HCT116 (cell line): ENCODE measurements at regions of chr19 and their contacts with region 1.

Region 1: GRCh38 chr19:35162471-35163326 is 8.2 kb downstream of the FXYD5 start:
- DNase-seq: peak; percentile 85
- ATAC-seq: peak; percentile 88
- H3K4me3 ChIP-seq: peak overlapping the region in 1 of 2 experiments; percentile 47; a peak in 2 of 4 replicates
- H3K27ac ChIP-seq: peak overlapping the region; percentile 62
- H3K4me1 ChIP-seq: peaks cover 38 to 69% of the 10 kb centered on the region in 2 experiments
- H3K27me3 ChIP-seq: no peaks in the 10 kb centered on the region
- CTCF ChIP-seq: no peak
- POLR2A ChIP-seq: no peak
- RAD21 ChIP-seq: no peak

Region 2: GRCh38 chr19:34943861-34944573 is 218.7 kb before region 1 on chr19:
- CTCF ChIA-PET with region 1: no interaction called
- POLR2A ChIA-PET with region 1: no interaction called
- RAD21 ChIA-PET with region 1: no interaction called
- intact Hi-C with region 1: no loop called
- DNase-seq: no peak
- ATAC-seq: no peak
- H3K4me3 ChIP-seq: no peak overlapping the region
- H3K27ac ChIP-seq: no peak overlapping the region
- H3K4me1 ChIP-seq: no peaks in the 10 kb centered on the region
- H3K27me3 ChIP-seq: no peaks in the 10 kb centered on the region
- CTCF ChIP-seq: no peak
- POLR2A ChIP-seq: no peak
- RAD21 ChIP-seq: no peak

Region 3: GRCh38 chr19:35098413-35099049 is 64.2 kb before region 1 on chr19:
- CTCF ChIA-PET with region 1: no interaction called
- POLR2A ChIA-PET with region 1: no interaction called
- RAD21 ChIA-PET with region 1: no interaction called
- intact Hi-C with region 1: no loop called
- DNase-seq: no peak
- ATAC-seq: no peak
- H3K4me3 ChIP-seq: no peak overlapping the region
- H3K27ac ChIP-seq: no peak overlapping the region
- H3K4me1 ChIP-seq: no peaks in the 10 kb centered on the region
- H3K27me3 ChIP-seq: no peaks in the 10 kb centered on the region
- CTCF ChIP-seq: no peak
- POLR2A ChIP-seq: no peak
- RAD21 ChIP-seq: no peak

Region 4: GRCh38 chr19:35124098-35125060 is 38.3 kb before region 1 on chr19:
- CTCF ChIA-PET with region 1: no interaction called
- POLR2A ChIA-PET with region 1: no interaction called
- RAD21 ChIA-PET with region 1: no interaction called
- intact Hi-C with region 1: no loop called
- DNase-seq: peak; percentile 70
- ATAC-seq: peak; percentile 96
- H3K4me3 ChIP-seq: peak overlapping the region; percentile 41 to 54
- H3K27ac ChIP-seq: peak overlapping the region; percentile 30; the same call in 1 of the 2 replicates
- H3K4me1 ChIP-seq: peaks cover 21 to 47% of the 10 kb centered on the region in 2 experiments
- H3K27me3 ChIP-seq: no peaks in the 10 kb centered on the region
- CTCF ChIP-seq: no peak
- POLR2A ChIP-seq: peak; percentile 57
- RAD21 ChIP-seq: no peak

Region 5: DNA sequence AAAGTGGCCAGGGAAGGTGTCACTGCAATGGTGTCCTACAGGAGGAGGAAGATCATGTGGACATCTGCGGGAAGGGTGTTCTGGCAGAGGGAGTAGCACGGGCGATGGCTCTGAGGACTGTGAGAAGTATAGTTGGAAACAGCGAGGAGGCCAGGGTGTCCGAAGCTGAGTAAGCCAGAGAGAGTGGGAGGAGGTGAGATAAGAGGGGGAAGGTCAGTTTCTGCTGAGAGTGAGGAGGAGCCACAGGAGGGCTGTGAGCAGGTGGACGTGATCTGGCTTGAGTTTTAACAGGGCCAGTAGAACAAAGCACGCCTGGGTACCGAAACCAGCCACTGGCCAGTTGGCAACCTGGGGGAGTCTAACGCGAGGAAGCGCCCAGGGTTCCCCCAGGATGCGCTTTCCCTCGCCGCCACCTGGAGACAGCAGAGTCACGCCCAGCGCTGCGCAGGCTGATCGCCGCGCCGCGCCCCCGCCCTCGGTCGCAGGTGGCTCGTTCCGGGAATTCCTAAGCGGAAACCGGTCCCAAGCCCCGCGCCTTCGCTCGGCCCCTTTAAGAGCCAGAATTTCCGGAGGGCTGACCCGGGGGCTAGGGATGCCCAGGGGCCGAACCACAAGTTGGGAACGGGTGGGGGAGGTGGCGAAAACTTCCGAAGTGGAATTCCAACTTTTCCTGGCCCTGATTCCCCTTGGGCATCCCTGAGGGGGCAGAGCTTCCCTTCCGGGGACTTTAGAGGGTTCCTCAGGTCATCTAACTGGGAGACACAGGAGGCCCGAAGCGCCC is 85.0 kb after region 1 on chr19:
- CTCF ChIA-PET with region 1: no interaction called
- POLR2A ChIA-PET with region 1: no interaction called
- RAD21 ChIA-PET with region 1: no interaction called
- intact Hi-C with region 1: loop called (anchors 5 kb)
- DNase-seq: peak; percentile 95
- ATAC-seq: peak; percentile 75
- H3K4me3 ChIP-seq: peak overlapping the region; percentile 98 to 99
- H3K27ac ChIP-seq: peak overlapping the region; percentile 98
- H3K4me1 ChIP-seq: peaks cover 10 to 26% of the 10 kb centered on the region in 2 experiments
- H3K27me3 ChIP-seq: no peaks in the 10 kb centered on the region
- CTCF ChIP-seq: peak in 2 of 3 experiments; percentile 51 to 61; a peak in 5 of 6 replicates
- POLR2A ChIP-seq: peak; percentile 40
- RAD21 ChIP-seq: peak; percentile 74